PC-3 (cell line): ENCODE measurements at regions of chr20 and their contacts with region 1.

Region 1: GRCh38 chr20:1776681-1777475 is 118.3 kb upstream of the SIRPA start:
- DNase-seq: peak; percentile 95
- ATAC-seq: peak; percentile 87
- H3K4me3 ChIP-seq: peak overlapping the region; percentile 63
- H3K27ac ChIP-seq: peak overlapping the region; percentile 75
- H3K4me1 ChIP-seq: peaks cover 28% of the 10 kb centered on the region
- H3K27me3 ChIP-seq: no peaks in the 10 kb centered on the region
- CTCF ChIP-seq: peak; percentile 81

Region 2: DNA sequence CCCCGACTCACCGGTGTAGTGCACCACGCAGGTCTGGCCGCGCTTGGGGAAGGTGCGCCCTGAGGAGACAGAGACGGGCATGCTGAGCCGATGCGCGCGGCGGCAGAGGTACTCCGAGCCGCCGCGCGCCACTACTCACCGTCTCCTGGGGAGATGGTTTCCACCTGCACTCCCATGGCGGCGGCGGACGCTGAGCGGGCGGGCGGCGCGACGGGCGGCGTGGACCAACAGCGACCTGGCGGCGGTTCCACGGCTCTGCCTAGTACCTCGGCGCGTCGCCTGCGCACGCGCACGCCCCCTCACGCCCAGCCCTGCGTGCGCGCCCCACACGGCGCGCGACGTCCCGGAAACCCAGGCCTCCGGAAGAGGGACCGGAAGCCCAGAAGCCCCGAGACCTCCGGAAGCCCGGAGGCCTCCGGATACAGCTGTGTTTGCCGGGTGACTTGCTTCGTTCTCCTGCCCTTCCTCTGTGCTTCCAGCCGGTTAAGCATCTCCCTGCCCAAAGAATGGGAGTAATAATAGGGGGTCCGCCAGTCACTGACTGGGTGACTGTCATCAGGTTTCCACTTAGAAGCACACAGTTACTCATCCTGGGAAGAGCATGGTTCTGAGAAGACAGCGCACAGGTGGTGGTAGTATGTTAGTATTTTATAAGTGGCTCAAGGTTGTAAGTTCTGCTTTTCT is 383.9 kb before region 1 on chr20 and contains the start of gene FKBP1A:
- CTCF ChIA-PET with region 1: no interaction called
- POLR2A ChIA-PET with region 1: no interaction called
- intact Hi-C with region 1: no loop called
- DNase-seq: peak; percentile 99
- ATAC-seq: peak; percentile 78
- H3K4me3 ChIP-seq: peak within 1 kb of the TSS; percentile 79
- H3K27ac ChIP-seq: peak within 1 kb of the TSS; percentile 43
- H3K4me1 ChIP-seq: peaks cover 66% of the 10 kb centered on the region
- H3K27me3 ChIP-seq: no peaks in the 10 kb centered on the region
- CTCF ChIP-seq: no peak
- total RNA-seq, gene FKBP1A: 178 and 198 TPM in 2 replicates

Region 3: DNA sequence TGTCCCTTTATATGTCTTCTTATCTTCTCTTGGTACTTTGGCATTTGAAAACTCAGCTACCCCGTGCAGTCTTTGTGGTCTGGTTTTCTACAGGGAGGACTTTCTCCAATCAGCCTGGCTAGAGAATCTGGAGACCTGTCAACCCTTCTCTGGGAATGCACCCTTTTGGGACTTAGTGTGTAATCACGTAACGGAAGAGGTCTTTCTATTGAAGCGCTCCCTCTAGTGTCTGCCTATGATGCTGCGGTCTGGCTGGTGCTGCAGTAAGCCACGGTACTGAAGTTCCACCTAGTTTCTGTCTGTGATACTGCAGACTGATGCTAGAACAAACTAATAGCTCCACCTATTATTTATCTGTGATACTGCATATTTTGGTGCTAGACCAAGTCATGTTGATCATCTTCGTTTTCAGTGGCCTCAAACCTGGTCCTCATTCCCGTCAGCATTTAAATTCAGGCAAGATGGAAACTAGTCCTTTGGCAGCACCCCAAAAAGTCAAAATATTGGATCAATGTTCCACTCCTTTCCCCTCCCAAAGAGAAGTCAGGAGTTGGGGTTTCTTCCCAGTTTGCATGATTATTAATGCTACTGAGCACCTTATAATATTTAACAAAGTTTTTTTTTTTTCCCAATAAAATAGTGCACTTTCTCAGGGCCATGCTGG is 273.2 kb before region 1 on chr20:
- CTCF ChIA-PET with region 1: interaction called, 32 read pairs
- POLR2A ChIA-PET with region 1: no interaction called
- intact Hi-C with region 1: no loop called
- DNase-seq: peak; percentile 98
- ATAC-seq: peak; percentile 85
- H3K4me3 ChIP-seq: no peak overlapping the region
- H3K27ac ChIP-seq: peak overlapping the region; percentile 85; the same call in 1 of the 2 replicates
- H3K4me1 ChIP-seq: peaks cover 50% of the 10 kb centered on the region
- H3K27me3 ChIP-seq: no peaks in the 10 kb centered on the region
- CTCF ChIP-seq: peak; percentile 100

Region 4: DNA sequence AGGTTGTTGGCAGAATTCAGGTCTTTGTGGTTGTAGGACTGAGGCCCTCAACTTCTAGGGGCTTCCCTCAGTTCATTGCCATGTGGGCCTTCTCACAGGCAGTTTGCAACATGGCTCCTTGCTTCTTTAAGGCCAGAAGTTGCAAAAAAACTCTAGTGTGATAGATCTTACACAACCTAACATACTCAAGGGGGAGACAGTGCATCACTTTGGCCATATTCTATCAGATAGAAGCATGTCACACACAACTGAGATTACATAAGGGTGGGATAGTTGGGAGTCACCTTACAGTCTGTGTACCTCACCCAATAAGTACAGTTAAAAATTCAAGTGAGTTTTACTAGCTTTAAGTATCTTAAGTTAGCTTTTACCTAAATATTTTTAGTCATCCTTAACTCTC is 220.9 kb before region 1 on chr20:
- CTCF ChIA-PET with region 1: interaction called, 3 read pairs
- POLR2A ChIA-PET with region 1: no interaction called
- intact Hi-C with region 1: loop called (anchors 2 kb)
- DNase-seq: no peak
- ATAC-seq: peak; percentile 38; the same call in 1 of the 2 replicates
- H3K4me3 ChIP-seq: no peak overlapping the region
- H3K27ac ChIP-seq: no peak overlapping the region
- H3K4me1 ChIP-seq: no peaks in the 10 kb centered on the region
- H3K27me3 ChIP-seq: no peaks in the 10 kb centered on the region
- CTCF ChIP-seq: peak; percentile 28; the same call in 1 of the 2 replicates

Region 5: GRCh38 chr20:1734269-1734858 is 42.5 kb before region 1 on chr20:
- CTCF ChIA-PET with region 1: no interaction called
- POLR2A ChIA-PET with region 1: no interaction called
- intact Hi-C with region 1: loop called (anchors 5 kb)
- DNase-seq: peak; percentile 79
- ATAC-seq: peak; percentile 97
- H3K4me3 ChIP-seq: no peak overlapping the region
- H3K27ac ChIP-seq: peak overlapping the region; percentile 62
- H3K4me1 ChIP-seq: peaks cover 19% of the 10 kb centered on the region
- H3K27me3 ChIP-seq: no peaks in the 10 kb centered on the region
- CTCF ChIP-seq: peak; percentile 84

Region 6: GRCh38 chr20:1815502-1816085 is 38.7 kb after region 1 on chr20:
- CTCF ChIA-PET with region 1: no interaction called
- POLR2A ChIA-PET with region 1: no interaction called
- intact Hi-C with region 1: loop called (anchors 1 kb)
- DNase-seq: no peak
- ATAC-seq: no peak
- H3K4me3 ChIP-seq: no peak overlapping the region
- H3K27ac ChIP-seq: peak overlapping the region; percentile 23; the same call in 1 of the 2 replicates
- H3K4me1 ChIP-seq: peaks cover 54% of the 10 kb centered on the region
- H3K27me3 ChIP-seq: no peaks in the 10 kb centered on the region
- CTCF ChIP-seq: no peak